BJ (cell line): ENCODE measurements at regions of chr19 and their contacts with region 1.

Region 1: DNA sequence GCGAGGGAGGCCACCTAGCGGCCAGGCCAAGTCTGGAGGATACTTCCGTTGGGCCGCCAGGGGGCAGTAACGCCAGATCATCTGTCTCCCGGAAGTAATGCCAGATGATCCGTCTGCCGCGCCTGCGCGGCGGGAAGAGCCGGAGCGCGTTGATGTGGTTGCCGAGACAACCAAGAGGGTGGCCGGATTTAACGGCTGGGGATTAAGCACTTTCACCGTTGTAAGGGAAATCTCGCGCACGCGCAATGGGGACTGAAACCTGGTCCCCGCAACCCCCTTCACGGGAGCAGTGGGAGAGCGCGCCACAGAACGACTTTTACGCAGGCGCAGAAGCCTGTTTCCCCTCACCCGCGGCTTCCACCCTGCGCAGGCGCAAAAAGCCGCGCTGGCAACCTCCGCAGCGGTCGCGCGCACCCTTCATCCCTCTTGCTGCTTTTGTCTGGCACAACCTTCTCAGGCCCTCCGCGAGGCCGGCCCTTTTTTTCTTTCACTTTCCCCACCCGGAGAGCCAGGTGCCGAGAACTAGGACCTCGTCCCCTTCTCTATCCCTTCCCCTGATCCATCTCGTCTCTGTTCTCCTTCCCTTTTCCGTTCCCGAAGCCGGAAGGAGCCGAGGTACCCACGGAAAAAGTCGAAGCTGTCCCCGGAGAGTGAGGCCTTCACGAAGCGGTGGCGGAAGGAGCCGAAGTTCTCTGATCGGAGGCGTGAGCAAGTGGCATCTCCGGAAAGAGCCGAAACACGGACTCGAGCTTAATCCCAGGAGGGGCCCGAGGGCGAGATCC is 886 bp upstream of the U2AF2 start:
- DNase-seq: peak; percentile 97
- H3K4me3 ChIP-seq: peak overlapping the region; percentile 97
- H3K27me3 ChIP-seq: no peaks in the 10 kb centered on the region
- CTCF ChIP-seq: peak; percentile 100

Region 2: DNA sequence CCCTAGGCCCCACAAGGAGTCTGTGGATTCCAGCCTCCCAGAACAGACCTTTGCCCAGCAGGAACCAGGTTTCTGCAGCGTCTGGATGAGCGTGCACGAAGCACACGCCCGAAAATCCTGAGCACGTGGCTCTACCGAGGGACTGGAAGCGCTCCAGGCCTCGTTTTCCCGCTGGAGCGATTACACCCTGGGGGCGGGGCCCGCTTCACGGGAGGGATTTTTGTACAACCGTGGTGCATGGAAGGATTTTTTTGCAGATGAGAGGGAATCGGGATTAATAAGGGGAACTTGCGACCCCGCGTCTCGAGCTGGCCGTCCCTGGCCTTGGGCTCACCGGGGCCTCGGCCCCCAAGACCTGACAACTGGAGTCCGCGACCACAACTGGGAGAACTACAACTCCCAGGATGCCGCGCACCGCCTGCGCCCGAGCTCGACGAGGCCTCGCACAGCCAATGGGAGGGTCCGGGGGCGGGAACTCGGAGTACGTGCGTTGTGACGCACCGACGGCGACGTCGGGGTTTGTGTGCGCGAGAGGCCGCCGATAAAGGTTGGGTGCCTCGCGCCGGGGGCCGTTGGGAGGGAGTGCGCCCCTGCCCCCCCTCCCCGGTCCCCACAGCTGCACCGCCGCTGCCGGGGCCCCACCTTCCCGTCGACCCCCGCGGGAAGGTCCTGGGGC is 177.7 kb before region 1 on chr19 and contains the start of gene ZNF628:
- CTCF ChIA-PET with region 1: no interaction called
- POLR2A ChIA-PET with region 1: interaction called, 10 read pairs
- DNase-seq: peak; percentile 74
- H3K4me3 ChIP-seq: peak within 1 kb of the TSS; percentile 58
- H3K27me3 ChIP-seq: no peaks in the 10 kb centered on the region
- CTCF ChIP-seq: no peak
- polyA plus RNA-seq, gene ZNF628: 0.36 and 0.48 TPM in 2 replicates

Region 3: GRCh38 chr19:55611983-55612645 is 41.8 kb before region 1 on chr19:
- CTCF ChIA-PET with region 1: no interaction called
- POLR2A ChIA-PET with region 1: no interaction called
- DNase-seq: no peak
- H3K4me3 ChIP-seq: no peak overlapping the region
- H3K27me3 ChIP-seq: no peaks in the 10 kb centered on the region
- CTCF ChIP-seq: no peak

Region 4: GRCh38 chr19:55632463-55632834 is 21.5 kb before region 1 on chr19:
- CTCF ChIA-PET with region 1: interaction called, 18 read pairs
- POLR2A ChIA-PET with region 1: interaction called, 3 read pairs
- DNase-seq: no peak
- H3K4me3 ChIP-seq: no peak overlapping the region
- H3K27me3 ChIP-seq: no peaks in the 10 kb centered on the region
- CTCF ChIP-seq: peak; percentile 83

Region 5: GRCh38 chr19:55643348-55644176 is 10.4 kb before region 1 on chr19 and contains the start of gene ZNF581:
- CTCF ChIA-PET with region 1: interaction called, 11 read pairs
- POLR2A ChIA-PET with region 1: interaction called, 4 read pairs
- DNase-seq: no peak
- H3K4me3 ChIP-seq: peak within 1 kb of the TSS; percentile 75
- H3K27me3 ChIP-seq: no peaks in the 10 kb centered on the region
- CTCF ChIP-seq: no peak
- polyA plus RNA-seq, gene ZNF581: 22.1 and 31.3 TPM in 2 replicates

Region 6: DNA sequence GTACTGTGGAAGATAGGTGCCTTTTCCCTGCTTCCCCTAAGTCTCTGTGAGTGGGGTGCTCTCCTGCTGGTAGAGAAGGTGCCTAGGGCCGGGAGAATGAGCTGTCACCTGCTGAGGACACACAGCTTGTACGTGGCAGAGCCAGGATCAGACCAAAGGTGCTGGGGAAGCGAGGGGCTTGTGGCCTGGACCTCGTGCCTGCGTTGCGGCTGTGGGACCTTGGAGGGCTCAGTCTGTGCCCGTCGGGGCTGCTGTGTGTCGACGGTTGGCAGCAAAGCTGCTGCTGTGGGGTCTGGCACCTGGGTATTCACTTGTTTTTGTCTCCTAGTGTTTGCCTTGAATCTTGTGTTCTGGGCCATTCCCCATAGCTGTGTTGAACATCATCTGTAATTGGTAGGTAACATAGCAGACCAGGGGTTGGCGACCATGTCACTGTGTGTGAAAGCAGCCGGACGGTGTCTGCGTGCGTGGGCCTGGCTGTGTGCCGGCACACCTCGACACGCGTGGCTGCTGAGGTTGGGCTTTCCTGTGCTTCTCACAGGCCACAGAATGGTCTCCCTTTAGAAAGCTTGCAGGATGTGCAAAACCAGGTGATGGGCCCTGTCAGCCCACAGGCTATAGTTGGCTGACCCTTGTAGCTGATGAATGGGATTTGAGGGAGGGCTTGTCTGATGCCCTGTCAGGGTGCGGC is 10.0 kb after region 1 on chr19:
- CTCF ChIA-PET with region 1: interaction called, 13 read pairs
- POLR2A ChIA-PET with region 1: no interaction called
- DNase-seq: no peak
- H3K4me3 ChIP-seq: no peak overlapping the region
- H3K27me3 ChIP-seq: no peaks in the 10 kb centered on the region
- CTCF ChIP-seq: no peak

Region 7: GRCh38 chr19:55670280-55671053 is 16.5 kb after region 1 on chr19:
- CTCF ChIA-PET with region 1: interaction called, 17 read pairs
- POLR2A ChIA-PET with region 1: no interaction called
- DNase-seq: no peak
- H3K4me3 ChIP-seq: no peak overlapping the region
- H3K27me3 ChIP-seq: no peaks in the 10 kb centered on the region
- CTCF ChIP-seq: no peak